PC-9 (cell line): ENCODE measurements at regions of chr1 and their contacts with region 1.

Region 1: DNA sequence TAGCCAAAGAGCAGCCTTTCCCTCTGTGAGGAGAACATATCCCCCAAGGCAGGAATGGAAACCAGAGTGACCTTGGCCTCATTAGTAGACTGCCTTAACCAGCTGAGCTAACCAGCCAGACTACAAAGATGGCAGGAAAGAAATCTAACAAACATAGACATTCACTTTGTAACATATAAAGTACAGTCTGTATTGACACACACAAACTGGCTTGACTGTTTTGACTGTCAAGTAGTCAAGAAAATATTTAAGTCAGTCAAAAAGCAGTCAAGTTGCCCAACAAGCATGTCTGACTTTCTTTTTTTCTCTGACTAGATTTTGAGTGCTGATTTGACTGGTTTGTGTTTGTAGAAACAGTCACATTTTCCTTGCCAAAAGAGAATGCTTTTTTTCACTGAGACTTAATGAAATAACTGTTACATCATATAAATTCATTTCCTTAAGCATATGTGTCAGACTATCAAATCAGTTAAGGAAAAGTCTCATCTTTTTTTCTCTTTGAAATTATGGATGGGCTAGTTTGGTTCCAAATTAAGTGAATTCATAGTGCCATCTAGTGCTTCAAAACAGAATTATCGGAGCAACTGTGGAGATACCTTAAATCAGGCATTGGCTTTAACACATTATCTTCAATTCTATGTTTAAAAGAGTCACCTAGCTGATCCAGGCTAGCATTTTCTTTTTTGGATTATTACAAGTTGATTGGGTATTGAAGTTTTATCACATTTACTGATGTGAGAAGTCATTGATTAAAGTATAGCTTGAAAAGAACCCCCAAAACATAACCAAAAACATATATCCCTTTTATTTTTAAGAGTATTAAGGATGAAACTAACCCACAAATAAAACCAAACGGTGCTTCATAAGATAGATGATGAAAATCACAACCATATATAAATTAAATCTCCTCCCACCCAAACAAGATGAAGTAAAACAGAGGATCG is 75.0 kb downstream of the ATP6V1G3 start:
- DNase-seq: peak in 1 of 2 experiments; percentile 65
- H3K4me3 ChIP-seq: no peak overlapping the region
- H3K27ac ChIP-seq: peak overlapping the region; percentile 8; the same call in 1 of the 2 replicates
- H3K4me1 ChIP-seq: 0 out of 2 replicates have a peak, but pooled peaks cover 3% of the 10 kb centered on the region
- H3K27me3 ChIP-seq: no peaks in the 10 kb centered on the region
- CTCF ChIP-seq: peak; percentile 86

Region 2: DNA sequence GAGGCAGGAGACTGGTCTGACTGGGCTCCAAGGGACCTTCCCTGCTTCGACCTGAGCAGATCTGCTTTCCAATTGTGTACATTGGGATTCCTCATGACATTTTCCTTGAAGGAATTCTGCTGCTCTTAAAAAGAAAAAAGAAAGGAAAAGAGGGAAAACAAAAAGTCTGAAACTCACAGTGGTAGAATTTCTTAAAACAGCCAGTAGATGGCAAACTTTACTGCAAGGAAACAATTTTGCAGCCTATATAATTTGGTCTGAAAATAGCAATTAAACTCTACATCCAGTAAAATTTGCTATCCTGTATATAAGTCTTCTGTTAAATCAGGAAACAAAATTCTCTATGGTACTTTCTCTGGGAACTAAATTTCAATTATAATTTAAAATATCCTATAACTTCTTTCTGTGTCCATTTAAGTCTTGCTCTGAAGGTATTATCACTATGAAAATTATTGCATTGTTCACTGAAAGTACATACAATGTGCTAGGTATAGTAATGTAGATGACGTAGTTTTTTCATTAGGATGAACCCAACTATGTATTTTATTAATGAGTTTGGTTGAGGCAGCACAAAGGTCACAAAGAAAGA is 1137.6 kb before region 1 on chr1:
- CTCF ChIA-PET with region 1: no interaction called
- POLR2A ChIA-PET with region 1: no interaction called
- intact Hi-C with region 1: loop called (anchors 5 kb)
- DNase-seq: no peak
- H3K4me3 ChIP-seq: no peak overlapping the region
- H3K27ac ChIP-seq: no peak overlapping the region
- H3K4me1 ChIP-seq: no peaks in the 10 kb centered on the region
- H3K27me3 ChIP-seq: no peaks in the 10 kb centered on the region
- CTCF ChIP-seq: peak; percentile 76

Region 3: GRCh38 chr1:197692965-197693364 is 772.5 kb before region 1 on chr1:
- CTCF ChIA-PET with region 1: no interaction called
- POLR2A ChIA-PET with region 1: no interaction called
- intact Hi-C with region 1: loop called (anchors 10 kb)
- DNase-seq: no peak
- H3K4me3 ChIP-seq: no peak overlapping the region
- H3K27ac ChIP-seq: no peak overlapping the region
- H3K4me1 ChIP-seq: peaks cover 11% of the 10 kb centered on the region
- H3K27me3 ChIP-seq: no peaks in the 10 kb centered on the region
- CTCF ChIP-seq: no peak; the same call in 1 of the 2 replicates

Region 4: DNA sequence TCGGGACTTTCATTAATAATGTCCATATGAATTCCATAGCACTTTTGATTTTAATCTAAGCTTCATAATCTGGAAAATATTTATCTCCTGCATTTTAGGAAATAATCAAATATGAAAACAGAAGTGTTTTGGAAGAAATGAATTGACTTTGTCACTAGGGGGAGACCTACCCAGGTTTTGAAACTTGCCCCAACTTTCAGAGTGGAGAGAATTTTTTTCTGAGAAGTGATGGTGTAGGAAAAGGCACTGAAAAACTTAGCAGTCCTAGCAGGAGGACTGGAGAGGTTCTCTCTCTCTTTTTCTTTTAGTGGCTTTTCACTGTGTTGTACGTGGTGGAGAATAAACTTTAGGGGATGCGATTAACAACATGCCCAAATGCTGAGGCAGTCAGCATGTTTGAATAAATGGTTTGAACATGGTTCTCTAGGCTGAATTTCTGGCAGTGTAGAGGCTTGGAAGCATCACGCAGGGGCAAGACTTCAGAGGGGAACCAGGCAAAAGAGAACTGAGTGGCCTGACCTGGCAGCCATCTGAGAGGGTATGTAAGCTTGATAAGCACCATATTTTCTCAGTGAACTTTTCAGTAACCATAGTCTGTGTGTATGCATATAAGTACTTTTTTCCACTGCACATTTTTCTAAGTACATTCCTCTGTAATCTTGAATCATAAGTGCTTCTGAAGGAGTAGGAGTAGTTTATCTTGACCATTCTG is 377.0 kb before region 1 on chr1:
- CTCF ChIA-PET with region 1: interaction called, 3 read pairs
- POLR2A ChIA-PET with region 1: no interaction called
- intact Hi-C with region 1: loop called (anchors 1 kb)
- DNase-seq: peak in 1 of 2 experiments; percentile 16
- H3K4me3 ChIP-seq: no peak overlapping the region
- H3K27ac ChIP-seq: no peak overlapping the region
- H3K4me1 ChIP-seq: no peaks in the 10 kb centered on the region
- H3K27me3 ChIP-seq: no peaks in the 10 kb centered on the region
- CTCF ChIP-seq: peak; percentile 75

Region 5: GRCh38 chr1:198449727-198450433 is 15.6 kb before region 1 on chr1:
- CTCF ChIA-PET with region 1: no interaction called
- POLR2A ChIA-PET with region 1: no interaction called
- intact Hi-C with region 1: loop called (anchors 2 kb)
- DNase-seq: peak in 1 of 2 experiments; percentile 37
- H3K4me3 ChIP-seq: peak overlapping the region; percentile 21; the same call in 1 of the 2 replicates
- H3K27ac ChIP-seq: peak overlapping the region; percentile 79
- H3K4me1 ChIP-seq: peaks cover 21% of the 10 kb centered on the region
- H3K27me3 ChIP-seq: no peaks in the 10 kb centered on the region
- CTCF ChIP-seq: no peak

Region 6: DNA sequence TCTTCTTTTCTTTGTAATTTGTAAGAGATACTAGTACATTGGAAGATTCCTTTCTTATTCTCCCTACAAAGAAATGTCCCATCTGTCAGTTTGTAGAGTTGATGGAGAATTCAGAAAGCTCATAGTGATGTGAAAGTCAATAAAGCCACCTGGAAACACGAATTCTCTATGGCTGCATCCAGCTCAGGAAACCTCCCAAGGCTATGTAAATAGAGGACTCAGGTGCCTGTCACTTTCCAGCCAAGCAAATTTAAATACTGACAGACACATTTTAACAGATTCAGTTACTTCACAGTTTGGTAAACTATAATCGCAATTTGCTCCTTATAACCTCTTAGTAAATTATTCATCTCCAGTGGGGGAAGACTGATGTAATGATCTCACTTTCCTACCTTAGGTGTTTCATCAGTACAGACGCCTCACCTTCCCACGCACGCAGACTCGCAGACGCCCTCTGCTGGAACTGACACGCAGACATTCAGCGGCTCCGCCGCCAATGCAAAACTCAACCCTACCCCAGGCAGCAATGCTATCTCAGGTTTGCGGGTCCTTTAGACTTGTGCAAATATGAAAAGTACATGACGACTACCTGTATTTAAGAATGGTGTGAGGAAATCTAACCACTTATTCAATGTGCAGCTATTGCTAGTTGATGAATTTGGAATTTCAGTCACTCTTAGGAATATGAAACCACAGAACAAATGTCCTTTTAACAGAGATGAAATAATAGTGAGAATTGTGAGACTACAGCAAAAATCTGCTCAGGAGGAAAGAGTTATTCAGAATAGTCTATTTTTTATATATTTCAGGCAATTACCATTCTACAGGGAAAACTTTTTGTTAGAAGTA is 233.9 kb after region 1 on chr1:
- CTCF ChIA-PET with region 1: no interaction called
- POLR2A ChIA-PET with region 1: interaction called, 13 read pairs
- intact Hi-C with region 1: no loop called
- DNase-seq: peak in 1 of 2 experiments; percentile 42
- H3K4me3 ChIP-seq: no peak overlapping the region
- H3K27ac ChIP-seq: no peak overlapping the region
- H3K4me1 ChIP-seq: no peaks in the 10 kb centered on the region
- H3K27me3 ChIP-seq: no peaks in the 10 kb centered on the region
- CTCF ChIP-seq: peak; percentile 62